MCF 10A (cell line): ENCODE measurements at regions of chr10 and their contacts with region 1.

Region 1: DNA sequence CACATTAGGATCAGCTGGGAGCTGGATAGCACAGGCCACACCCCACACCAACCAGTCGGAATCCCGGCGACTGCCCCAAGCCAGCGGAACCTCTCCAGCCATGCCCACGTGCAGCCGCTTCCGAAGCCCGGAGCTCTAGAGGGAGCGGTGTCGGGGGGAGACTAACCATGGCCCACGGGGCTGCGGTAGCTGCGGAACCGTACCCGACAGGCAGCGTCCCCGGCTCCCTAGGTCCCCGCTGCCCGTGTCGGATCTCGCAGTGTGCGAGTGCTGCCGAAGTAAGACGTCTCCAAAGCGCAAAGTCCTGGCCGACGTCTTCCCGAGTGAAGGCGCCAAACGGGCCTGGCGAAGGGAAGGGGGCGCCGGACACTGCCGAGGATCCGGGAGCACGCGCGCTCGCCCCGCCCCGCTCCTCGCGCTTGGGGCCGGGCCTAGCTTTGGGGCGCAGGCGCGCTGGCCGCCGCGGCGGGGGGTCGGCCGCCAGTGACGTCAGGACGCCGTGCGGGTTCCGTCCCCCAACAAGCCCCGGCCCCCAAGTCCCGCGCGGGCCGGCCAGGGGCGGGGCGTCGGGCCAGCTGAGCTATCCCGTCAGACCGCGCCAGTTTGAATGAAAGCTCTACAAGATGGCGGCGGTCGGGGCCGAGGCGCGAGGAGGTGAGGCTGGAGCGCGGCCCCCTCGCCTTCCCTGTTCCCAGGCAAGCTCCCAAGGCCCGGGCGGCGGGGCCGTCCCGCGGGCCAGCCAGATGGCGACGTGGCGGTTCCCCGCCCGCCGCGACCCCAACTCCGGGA is at the start of gene SUV39H2:
- DNase-seq: peak; percentile 95
- H3K4me3 Mint-ChIP-seq: peak within 1 kb of the TSS; percentile 79
- H3K27ac Mint-ChIP-seq: peak within 1 kb of the TSS; percentile 82
- H3K4me1 Mint-ChIP-seq: peaks cover 27% of the 10 kb centered on the region
- H3K27me3 Mint-ChIP-seq: no peaks in the 10 kb centered on the region
- CTCF ChIP-seq: no peak
- total RNA-seq, gene SUV39H2: 14.9 and 16.0 TPM in 2 replicates

Region 2: GRCh38 chr10:14837757-14838581 is 40.5 kb before region 1 on chr10 and contains the starts of genes CDNF, HSPA14 and MSANTD7:
- CTCF ChIA-PET with region 1: interaction called, 3 read pairs
- POLR2A ChIA-PET with region 1: interaction called, 90 read pairs
- intact Hi-C with region 1: loop called (anchors 1 kb)
- DNase-seq: peak; percentile 99
- H3K4me3 Mint-ChIP-seq: peak within 1 kb of the TSS; percentile 76
- H3K27ac Mint-ChIP-seq: peak within 1 kb of the TSS; percentile 91
- H3K4me1 Mint-ChIP-seq: no peaks in the 10 kb centered on the region
- H3K27me3 Mint-ChIP-seq: no peaks in the 10 kb centered on the region
- CTCF ChIP-seq: no peak
- total RNA-seq, gene CDNF: 1.9 and 2.9 TPM in 2 replicates
- total RNA-seq, gene HSPA14: 12.1 and 14.0 TPM in 2 replicates
- total RNA-seq, gene MSANTD7: 17.2 and 18.1 TPM in 2 replicates

Region 3: GRCh38 chr10:14889318-14889717 is 10.9 kb after region 1 on chr10:
- CTCF ChIA-PET with region 1: no interaction called
- POLR2A ChIA-PET with region 1: interaction called, 30 read pairs
- intact Hi-C with region 1: no loop called
- DNase-seq: no peak
- H3K4me3 Mint-ChIP-seq: no peak overlapping the region
- H3K27ac Mint-ChIP-seq: no peak overlapping the region
- H3K4me1 Mint-ChIP-seq: no peaks in the 10 kb centered on the region
- H3K27me3 Mint-ChIP-seq: no peaks in the 10 kb centered on the region
- CTCF ChIP-seq: no peak

Region 4: GRCh38 chr10:14945091-14945490 is 66.6 kb after region 1 on chr10:
- CTCF ChIA-PET with region 1: interaction called, 4 read pairs
- POLR2A ChIA-PET with region 1: no interaction called
- intact Hi-C with region 1: loop called (anchors 2 kb)
- DNase-seq: peak; percentile 36
- H3K4me3 Mint-ChIP-seq: no peak overlapping the region
- H3K27ac Mint-ChIP-seq: peak overlapping the region; percentile 42
- H3K4me1 Mint-ChIP-seq: peaks cover 5% of the 10 kb centered on the region
- H3K27me3 Mint-ChIP-seq: no peaks in the 10 kb centered on the region
- CTCF ChIP-seq: no peak

Region 5: GRCh38 chr10:14959276-14960057 is 81.0 kb after region 1 on chr10 and contains the start of gene MEIG1:
- CTCF ChIA-PET with region 1: interaction called, 3 read pairs
- POLR2A ChIA-PET with region 1: interaction called, 62 read pairs
- intact Hi-C with region 1: no loop called
- DNase-seq: peak; percentile 93
- H3K4me3 Mint-ChIP-seq: peak within 1 kb of the TSS; percentile 98
- H3K27ac Mint-ChIP-seq: peak within 1 kb of the TSS; percentile 99
- H3K4me1 Mint-ChIP-seq: no peaks in the 10 kb centered on the region
- H3K27me3 Mint-ChIP-seq: no peaks in the 10 kb centered on the region
- CTCF ChIP-seq: no peak
- total RNA-seq, gene MEIG1: 1.7 TPM in 1 of 2 replicates, not detected in the other

Region 6: GRCh38 chr10:15168781-15169554 is 290.5 kb after region 1 on chr10:
- CTCF ChIA-PET with region 1: no interaction called
- POLR2A ChIA-PET with region 1: interaction called, 7 read pairs
- intact Hi-C with region 1: loop called (anchors 10 kb)
- DNase-seq: peak; percentile 92
- H3K4me3 Mint-ChIP-seq: peak overlapping the region; percentile 87
- H3K27ac Mint-ChIP-seq: peak overlapping the region; percentile 80
- H3K4me1 Mint-ChIP-seq: peaks cover 23% of the 10 kb centered on the region
- H3K27me3 Mint-ChIP-seq: no peaks in the 10 kb centered on the region
- CTCF ChIP-seq: no peak